ENCODE measurements at regions of chr7 and their contacts with region 1.

Region 1: DNA sequence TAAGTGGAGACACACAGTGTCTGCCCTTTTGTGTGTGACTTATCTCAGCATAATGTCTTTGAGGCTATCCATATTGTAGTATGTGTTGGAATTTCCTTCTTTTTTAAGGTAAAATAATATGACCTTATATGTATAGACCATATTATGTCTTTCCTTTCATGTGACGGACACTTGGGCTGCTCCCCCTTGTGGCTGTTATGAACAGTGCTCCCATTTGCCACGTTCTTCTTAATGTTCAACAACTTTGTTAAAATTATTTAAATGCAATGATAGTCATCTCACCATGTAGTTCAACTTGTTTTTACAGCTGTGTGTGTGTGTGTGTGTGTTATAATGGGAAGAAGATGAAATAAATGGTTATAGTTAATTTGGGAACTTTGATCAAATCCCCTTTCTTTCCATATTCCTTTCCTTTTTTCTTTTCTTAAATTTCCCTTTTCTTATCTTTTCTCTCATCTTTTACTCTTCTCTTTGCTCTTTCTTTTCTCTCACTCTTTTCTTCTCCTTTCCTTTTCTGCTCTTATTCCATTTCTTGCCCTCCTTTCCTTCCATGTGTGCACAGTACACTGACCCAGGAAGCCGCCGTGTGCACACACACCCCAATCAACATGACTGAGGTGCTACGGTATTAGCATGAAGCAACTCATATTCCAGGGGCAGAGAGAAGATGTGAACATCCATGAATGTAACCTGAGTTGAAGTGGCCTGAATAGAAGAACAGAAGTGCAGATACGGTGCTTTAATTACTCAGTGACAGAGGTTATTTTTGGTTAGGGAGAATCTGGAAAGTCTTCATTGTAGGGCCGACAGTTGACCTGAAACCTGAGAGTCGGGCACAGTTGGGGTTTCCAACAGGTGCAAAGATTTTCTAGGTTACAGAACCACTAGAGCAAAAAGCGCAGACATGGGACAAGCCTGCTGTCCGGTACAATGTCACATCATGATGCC is 596.7 kb downstream of the SDK1 start:
- DNase-seq: peak; percentile 36
- H3K4me3 ChIP-seq: no peak overlapping the region
- H3K27ac ChIP-seq: no peak overlapping the region
- H3K4me1 ChIP-seq: no peaks in the 10 kb centered on the region
- H3K27me3 ChIP-seq: no peaks in the 10 kb centered on the region
- CTCF ChIP-seq: peak; percentile 71 to 80 (median 76)
- POLR2A ChIP-seq: no peak

Region 2: GRCh38 chr7:2876031-2876731 is 1021.5 kb before region 1 on chr7:
- intact Hi-C with region 1: loop called (anchors 5 kb)
- DNase-seq: no peak
- H3K4me3 ChIP-seq: no peak overlapping the region
- H3K27ac ChIP-seq: no peak overlapping the region
- H3K4me1 ChIP-seq: no peaks in the 10 kb centered on the region
- H3K27me3 ChIP-seq: no peaks in the 10 kb centered on the region
- CTCF ChIP-seq: no peak
- POLR2A ChIP-seq: no peak